ENCODE measurements at regions of chr19 and their contacts with region 1.

Region 1: DNA sequence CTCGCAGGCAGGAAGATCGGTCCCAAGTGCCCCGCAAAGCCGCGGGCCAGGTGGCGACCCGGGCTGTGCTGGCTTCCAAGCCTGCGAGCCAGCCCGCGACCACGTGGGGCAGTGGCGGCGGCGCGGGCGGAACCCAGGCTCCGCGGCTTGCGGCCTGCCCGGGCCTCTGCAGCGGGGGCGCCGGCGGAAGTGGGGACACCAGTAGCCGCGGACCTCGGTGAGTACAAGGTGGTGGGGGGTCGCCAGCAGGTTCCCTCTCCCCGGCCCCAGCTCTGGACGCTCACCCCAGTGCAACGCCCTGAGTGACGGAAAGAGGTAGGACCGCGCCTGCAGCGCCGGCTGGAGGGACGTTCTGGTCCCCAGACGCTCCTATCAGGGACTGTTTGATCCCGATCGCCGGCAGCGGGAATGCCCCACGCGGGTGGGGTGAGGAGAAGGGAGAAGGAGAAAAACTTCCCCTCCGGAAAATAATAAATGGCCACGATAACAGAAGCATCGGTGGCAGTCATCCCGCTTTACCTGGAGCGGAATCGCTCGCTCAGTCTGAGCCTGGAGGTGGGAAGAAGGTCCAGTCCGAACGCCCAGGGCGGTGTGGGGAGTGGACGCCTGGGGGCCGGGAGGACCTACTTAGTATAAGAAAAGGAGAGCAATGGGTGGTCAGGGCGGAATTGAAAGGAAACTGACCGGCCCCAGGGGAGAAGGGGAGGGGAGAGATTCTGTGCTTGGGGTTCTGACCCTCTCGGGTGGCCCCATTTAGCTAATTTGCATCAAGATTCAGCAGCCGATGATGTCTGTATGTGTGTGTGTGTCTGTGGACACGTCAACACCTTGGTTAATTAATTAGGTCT is at the start of gene GEMIN7:
- DNase-seq: peak; percentile 64
- ATAC-seq: peak; percentile 56
- H3K4me3 ChIP-seq: peak within 1 kb of the TSS; percentile 89
- H3K27ac ChIP-seq: peak within 1 kb of the TSS; percentile 95
- H3K4me1 ChIP-seq: peaks cover 22% of the 10 kb centered on the region
- H3K27me3 ChIP-seq: no peaks in the 10 kb centered on the region
- CTCF ChIP-seq: peak in 2 of 3 experiments; percentile 9 to 11; a peak in 1 of 6 replicates
- EP300 ChIP-seq: peak; percentile 65 to 80; a peak in 2 of 4 replicates
- POLR2A ChIP-seq: peak; percentile 83
- RAD21 ChIP-seq: no peak
- polyA plus RNA-seq, gene GEMIN7: 51.6 to 55.3 TPM

Region 2: DNA sequence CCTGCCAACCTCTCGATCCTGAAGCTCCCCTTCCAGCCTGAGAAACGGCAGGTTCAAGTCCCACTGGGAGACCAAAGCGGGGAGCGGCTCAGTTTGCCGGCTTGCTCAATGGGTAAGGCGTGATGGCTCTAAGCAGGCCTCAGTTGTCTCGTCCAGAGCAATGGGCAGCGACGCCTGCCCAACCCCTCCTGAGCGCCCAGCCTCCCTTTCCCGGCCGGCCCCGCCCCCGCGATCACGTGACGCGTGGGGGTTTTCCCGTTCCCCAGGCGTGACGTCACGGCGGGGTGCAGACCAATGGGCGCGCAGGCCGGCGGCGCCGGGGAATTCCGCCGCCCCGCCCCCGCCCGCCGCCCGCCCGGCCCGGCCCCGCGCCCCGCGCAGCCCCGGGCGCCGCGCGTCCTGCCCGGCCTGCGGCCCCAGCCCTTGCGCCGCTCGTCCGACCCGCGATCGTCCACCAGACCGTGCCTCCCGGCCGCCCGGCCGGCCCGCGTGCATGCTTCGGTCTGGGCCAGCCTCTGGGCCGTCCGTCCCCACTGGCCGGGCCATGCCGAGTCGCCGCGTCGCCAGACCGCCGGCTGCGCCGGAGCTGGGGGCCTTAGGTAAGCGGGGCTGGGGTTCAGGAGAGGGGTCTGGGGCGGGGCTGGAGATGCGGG is 78.1 kb before region 1 on chr19 and contains the start of gene RELB:
- CTCF ChIA-PET with region 1: no interaction called
- POLR2A ChIA-PET with region 1: interaction called, 15 read pairs
- RAD21 ChIA-PET with region 1: no interaction called
- SMC1A ChIA-PET with region 1: interaction called, 3 read pairs
- in situ Hi-C with region 1: no loop called
- intact Hi-C with region 1: no loop called
- DNase-seq: peak; percentile 57
- ATAC-seq: peak; percentile 74
- H3K4me3 ChIP-seq: peak within 1 kb of the TSS; percentile 91
- H3K27ac ChIP-seq: peak within 1 kb of the TSS; percentile 92
- H3K4me1 ChIP-seq: peaks cover 3% of the 10 kb centered on the region; the same call in 1 of the 2 replicates
- H3K27me3 ChIP-seq: no peaks in the 10 kb centered on the region
- CTCF ChIP-seq: no peak
- EP300 ChIP-seq: 0 out of 4 replicates have a peak, but pooled peaks have one; percentile 22 to 25
- POLR2A ChIP-seq: peak; percentile 89
- RAD21 ChIP-seq: no peak
- polyA plus RNA-seq, gene RELB: 0.66 to 3.2 TPM

Region 3: GRCh38 chr19:45016388-45017319 is 62.6 kb before region 1 on chr19:
- CTCF ChIA-PET with region 1: no interaction called
- POLR2A ChIA-PET with region 1: interaction called, 9 read pairs
- RAD21 ChIA-PET with region 1: no interaction called
- SMC1A ChIA-PET with region 1: no interaction called
- in situ Hi-C with region 1: no loop called
- intact Hi-C with region 1: loop called (anchors 1 kb)
- DNase-seq: peak; percentile 94
- ATAC-seq: peak; percentile 91
- H3K4me3 ChIP-seq: peak overlapping the region; percentile 60
- H3K27ac ChIP-seq: peak overlapping the region; percentile 89
- H3K4me1 ChIP-seq: peaks cover 20% of the 10 kb centered on the region
- H3K27me3 ChIP-seq: no peaks in the 10 kb centered on the region
- CTCF ChIP-seq: peak; percentile 74 to 81 (median 79)
- EP300 ChIP-seq: peak; percentile 75 to 91; a peak in 3 of 4 replicates
- POLR2A ChIP-seq: no peak; the same call in 1 of the 2 replicates
- RAD21 ChIP-seq: peak; percentile 87

Region 4: DNA sequence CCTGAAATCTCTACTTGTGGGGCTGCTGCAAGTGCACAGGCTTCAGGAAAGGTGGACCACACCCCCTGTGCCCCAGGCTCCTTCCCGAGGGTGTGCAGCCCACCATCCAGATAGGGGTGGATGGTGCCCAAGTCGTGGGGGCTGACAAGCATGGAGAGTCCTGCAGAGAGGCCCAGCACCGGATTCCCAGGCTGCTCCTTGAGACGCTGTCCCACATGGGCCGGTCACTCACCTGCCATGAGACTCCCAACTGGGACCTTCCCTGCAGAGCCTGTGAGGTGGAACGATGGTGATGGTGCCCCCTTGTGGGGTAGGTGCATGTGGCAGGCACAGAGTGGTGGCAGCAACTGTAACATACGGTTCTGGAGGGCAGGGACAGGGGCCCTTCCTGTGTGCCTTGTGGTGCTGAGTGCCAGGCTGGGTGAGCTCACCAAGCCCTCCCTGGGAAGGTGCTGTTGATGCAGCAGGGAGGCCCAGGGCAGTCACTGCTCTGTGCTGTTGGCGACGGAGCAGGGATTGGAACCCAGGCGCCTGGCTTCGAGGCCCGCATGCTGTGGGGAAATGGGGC is 46.7 kb after region 1 on chr19:
- CTCF ChIA-PET with region 1: interaction called, 19 read pairs
- POLR2A ChIA-PET with region 1: interaction called, 5 read pairs
- RAD21 ChIA-PET with region 1: interaction called, 3 read pairs
- SMC1A ChIA-PET with region 1: interaction called, 4 read pairs
- in situ Hi-C with region 1: no loop called
- intact Hi-C with region 1: no loop called
- DNase-seq: no peak
- ATAC-seq: peak; percentile 95
- H3K4me3 ChIP-seq: no peak overlapping the region
- H3K27ac ChIP-seq: no peak overlapping the region
- H3K4me1 ChIP-seq: peaks cover 21% of the 10 kb centered on the region
- H3K27me3 ChIP-seq: no peaks in the 10 kb centered on the region
- CTCF ChIP-seq: peak; percentile 79 to 93 (median 83)
- EP300 ChIP-seq: no peak
- POLR2A ChIP-seq: peak; percentile 28; the same call in 1 of the 2 replicates
- RAD21 ChIP-seq: peak; percentile 76

Region 5: GRCh38 chr19:45178262-45179071 is 99.2 kb after region 1 on chr19 and contains the start of gene BLOC1S3:
- CTCF ChIA-PET with region 1: interaction called, 3 read pairs
- POLR2A ChIA-PET with region 1: interaction called, 5 read pairs
- RAD21 ChIA-PET with region 1: interaction called, 7 read pairs
- SMC1A ChIA-PET with region 1: interaction called, 4 read pairs
- in situ Hi-C with region 1: no loop called
- intact Hi-C with region 1: loop called (anchors 5 kb)
- DNase-seq: peak; percentile 100
- ATAC-seq: peak; percentile 89
- H3K4me3 ChIP-seq: peak within 1 kb of the TSS; percentile 96
- H3K27ac ChIP-seq: peak within 1 kb of the TSS; percentile 79
- H3K4me1 ChIP-seq: peaks cover 25% of the 10 kb centered on the region
- H3K27me3 ChIP-seq: no peaks in the 10 kb centered on the region
- CTCF ChIP-seq: peak; percentile 19 to 48 (median 37); a peak in 4 of 6 replicates
- EP300 ChIP-seq: no peak
- POLR2A ChIP-seq: peak; percentile 83
- RAD21 ChIP-seq: no peak
- polyA plus RNA-seq, gene BLOC1S3: 10.0 to 14.5 TPM